ENCODE measurements at regions of chr1 and their contacts with region 1.

Region 1: GRCh38 chr1:9269078-9269501 is 23.6 kb upstream of the SPSB1 start:
- DNase-seq: no peak
- H3K4me3 ChIP-seq: no peak overlapping the region
- H3K27ac ChIP-seq: no peak overlapping the region
- H3K4me1 ChIP-seq: no peaks in the 10 kb centered on the region
- H3K27me3 ChIP-seq: no peaks in the 10 kb centered on the region
- CTCF ChIP-seq: no peak

Region 2: GRCh38 chr1:9038881-9039760 is 230.0 kb before region 1 on chr1:
- CTCF ChIA-PET with region 1: no interaction called
- POLR2A ChIA-PET with region 1: no interaction called
- intact Hi-C with region 1: no loop called
- DNase-seq: no peak
- H3K4me3 ChIP-seq: no peak overlapping the region
- H3K27ac ChIP-seq: no peak overlapping the region
- H3K4me1 ChIP-seq: no peaks in the 10 kb centered on the region
- H3K27me3 ChIP-seq: peaks cover 25% of the 10 kb centered on the region
- CTCF ChIP-seq: no peak

Region 3: GRCh38 chr1:9110669-9111356 is 158.3 kb before region 1 on chr1:
- CTCF ChIA-PET with region 1: interaction called, 10 read pairs
- POLR2A ChIA-PET with region 1: no interaction called
- intact Hi-C with region 1: no loop called
- DNase-seq: peak; percentile 87
- H3K4me3 ChIP-seq: no peak overlapping the region
- H3K27ac ChIP-seq: no peak overlapping the region
- H3K4me1 ChIP-seq: no peaks in the 10 kb centered on the region
- H3K27me3 ChIP-seq: no peaks in the 10 kb centered on the region
- CTCF ChIP-seq: peak; percentile 95

Region 4: DNA sequence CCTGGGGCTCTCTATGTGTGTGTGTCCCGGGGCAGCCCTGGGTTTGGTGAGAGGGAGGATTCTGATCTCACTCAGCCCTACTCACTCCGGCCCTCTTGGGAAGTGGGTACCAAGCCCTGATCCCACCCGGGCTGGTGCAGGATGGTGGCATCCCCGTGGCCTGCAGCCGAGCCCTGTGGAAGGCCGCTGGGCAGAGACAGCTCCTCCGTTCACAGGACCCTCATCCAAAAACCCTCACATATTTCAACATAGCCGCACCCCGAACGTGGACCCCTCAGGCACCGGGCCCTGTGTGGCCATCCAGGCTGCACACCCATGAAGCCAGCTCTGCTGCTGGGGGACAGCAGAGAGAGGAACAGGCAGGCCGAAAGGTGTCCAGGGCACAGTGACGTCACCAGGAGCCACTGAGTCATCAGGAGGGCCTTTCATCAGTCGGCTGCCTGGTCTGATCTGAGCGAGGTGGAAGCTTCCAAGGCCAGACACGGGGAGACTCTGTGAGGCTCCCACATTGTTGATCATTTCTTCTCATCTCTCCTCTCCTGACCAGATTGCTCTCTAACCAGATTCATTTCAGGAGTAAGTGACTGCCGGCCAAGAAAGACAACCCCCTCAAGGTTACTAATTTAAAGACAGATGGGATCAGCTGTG is 123.9 kb before region 1 on chr1:
- CTCF ChIA-PET with region 1: no interaction called
- POLR2A ChIA-PET with region 1: no interaction called
- intact Hi-C with region 1: no loop called
- DNase-seq: no peak
- H3K4me3 ChIP-seq: no peak overlapping the region
- H3K27ac ChIP-seq: no peak overlapping the region
- H3K4me1 ChIP-seq: no peaks in the 10 kb centered on the region
- H3K27me3 ChIP-seq: no peaks in the 10 kb centered on the region
- CTCF ChIP-seq: no peak

Region 5: GRCh38 chr1:9455487-9456234 is 186.6 kb after region 1 on chr1:
- CTCF ChIA-PET with region 1: interaction called, 13 read pairs
- POLR2A ChIA-PET with region 1: no interaction called
- intact Hi-C with region 1: loop called (anchors 1 kb)
- DNase-seq: peak; percentile 73
- H3K4me3 ChIP-seq: no peak overlapping the region
- H3K27ac ChIP-seq: no peak overlapping the region
- H3K4me1 ChIP-seq: no peaks in the 10 kb centered on the region
- H3K27me3 ChIP-seq: no peaks in the 10 kb centered on the region
- CTCF ChIP-seq: peak; percentile 87

Region 6: DNA sequence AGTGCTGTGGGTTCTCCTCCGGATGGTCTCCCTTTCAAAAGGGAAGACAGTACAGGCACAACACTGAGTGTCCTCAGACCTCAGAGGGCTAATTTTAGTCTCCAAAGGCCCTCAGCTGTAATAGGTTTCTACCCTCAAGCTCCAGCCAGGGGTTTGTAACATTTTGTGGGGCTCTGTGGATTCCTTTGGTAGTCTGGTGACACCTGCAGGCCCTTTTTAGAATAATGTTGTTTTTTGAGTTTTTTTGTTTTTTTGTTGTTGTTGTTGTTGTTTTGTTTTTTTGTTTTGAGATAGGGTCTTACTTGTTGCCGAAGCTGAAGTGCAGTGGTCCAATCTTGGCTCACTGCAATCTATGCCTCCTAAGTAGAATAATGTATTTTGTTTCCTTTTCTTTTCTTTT is 304.6 kb after region 1 on chr1:
- CTCF ChIA-PET with region 1: no interaction called
- POLR2A ChIA-PET with region 1: interaction called, 7 read pairs
- intact Hi-C with region 1: loop called (anchors 10 kb)
- DNase-seq: peak; percentile 39
- H3K4me3 ChIP-seq: no peak overlapping the region
- H3K27ac ChIP-seq: no peak overlapping the region
- H3K4me1 ChIP-seq: no peaks in the 10 kb centered on the region
- H3K27me3 ChIP-seq: no peaks in the 10 kb centered on the region
- CTCF ChIP-seq: peak; percentile 51

Region 7: DNA sequence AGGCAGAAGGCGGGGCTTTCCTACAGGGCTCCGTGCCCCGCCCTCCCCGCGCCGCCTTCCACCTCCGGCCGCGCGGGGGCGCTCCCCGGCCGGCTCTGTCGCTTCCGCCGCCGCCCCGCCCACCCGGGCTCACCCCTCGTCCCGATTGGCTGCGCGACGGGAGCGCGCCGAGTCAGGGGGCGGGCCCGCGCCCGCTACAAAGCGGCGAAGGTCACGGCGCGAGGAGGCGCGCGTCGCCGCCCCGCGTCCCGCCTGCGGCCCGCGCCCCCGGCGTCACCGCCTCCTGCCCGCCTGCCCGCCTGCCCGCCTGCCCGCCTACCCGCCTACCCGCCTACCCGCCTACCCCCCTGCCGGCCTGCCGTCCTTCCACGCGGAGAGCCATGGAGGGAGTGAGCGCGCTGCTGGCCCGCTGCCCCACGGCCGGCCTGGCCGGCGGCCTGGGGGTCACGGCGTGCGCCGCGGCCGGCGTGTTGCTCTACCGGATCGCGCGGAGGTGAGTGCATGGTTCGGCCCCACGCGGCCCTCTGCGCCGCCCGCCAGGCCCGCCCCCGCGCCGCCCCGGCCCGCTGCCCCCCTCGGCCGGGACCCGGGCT is 319.6 kb after region 1 on chr1 and contains the start of gene TMEM201:
- CTCF ChIA-PET with region 1: no interaction called
- POLR2A ChIA-PET with region 1: no interaction called
- intact Hi-C with region 1: no loop called
- DNase-seq: peak; percentile 96
- H3K4me3 ChIP-seq: peak within 1 kb of the TSS; percentile 91
- H3K27ac ChIP-seq: peak within 1 kb of the TSS; percentile 83
- H3K4me1 ChIP-seq: peaks cover 37% of the 10 kb centered on the region
- H3K27me3 ChIP-seq: no peaks in the 10 kb centered on the region
- CTCF ChIP-seq: peak; percentile 65
- total RNA-seq, gene TMEM201: 46.5 and 49.0 TPM in 2 replicates

Region 8: DNA sequence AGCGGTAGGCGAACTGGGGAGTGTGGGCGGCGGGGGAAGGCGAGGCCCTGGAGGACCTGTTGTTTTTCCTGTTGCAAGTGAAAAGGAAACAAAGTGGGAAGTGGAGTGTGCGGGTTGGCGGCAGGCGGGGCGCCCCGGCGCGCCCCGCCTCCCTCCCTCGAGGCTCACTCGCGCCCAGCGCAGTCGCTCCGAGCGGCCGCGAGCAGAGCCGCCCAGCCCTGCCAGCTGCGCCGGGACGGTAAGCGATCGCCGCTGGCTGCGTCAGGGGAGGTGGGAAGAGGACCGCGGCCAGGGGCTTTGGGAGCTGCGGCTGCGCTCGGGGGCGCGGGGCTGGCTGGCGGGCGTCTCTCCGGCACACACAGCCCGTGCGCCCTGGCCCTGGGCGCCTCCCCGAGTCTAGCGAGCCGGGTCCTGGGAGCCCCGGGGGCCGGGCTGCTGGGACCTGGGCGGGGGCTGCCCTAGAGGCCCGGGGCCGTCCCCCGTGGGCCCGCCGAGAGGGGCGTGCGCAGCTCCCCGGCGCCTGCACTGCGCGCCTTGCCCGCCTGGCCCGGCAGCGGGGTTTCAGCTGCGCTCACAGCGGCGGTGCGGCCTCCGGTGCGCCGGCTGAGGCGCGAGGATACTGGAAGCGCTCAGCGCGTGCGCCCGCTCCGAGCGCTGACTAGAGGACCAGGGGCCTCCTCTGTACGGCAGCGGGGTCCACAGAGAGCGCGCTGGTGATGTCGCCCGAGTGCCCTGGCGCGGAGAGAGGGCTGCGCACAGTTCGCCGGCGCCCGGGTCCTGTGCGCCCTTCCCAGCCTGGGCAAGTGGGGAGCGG is 382.7 kb after region 1 on chr1 and contains the start of gene PIK3CD:
- CTCF ChIA-PET with region 1: no interaction called
- POLR2A ChIA-PET with region 1: no interaction called
- intact Hi-C with region 1: no loop called
- DNase-seq: peak; percentile 56
- H3K4me3 ChIP-seq: peak within 1 kb of the TSS; percentile 38
- H3K27ac ChIP-seq: no peak within 1 kb of the TSS
- H3K4me1 ChIP-seq: peaks cover 20% of the 10 kb centered on the region
- H3K27me3 ChIP-seq: peaks cover 41% of the 10 kb centered on the region
- CTCF ChIP-seq: no peak
- total RNA-seq, gene PIK3CD: 2.1 and 5.0 TPM in 2 replicates

Measured in A673 (cell line).